ENCODE measurements at regions of chr3 and their contacts with region 1.

Region 1: GRCh38 chr3:115226844-115227445 is 79.9 kb upstream of the ZBTB20 start:
- DNase-seq: no peak

Region 2: GRCh38 chr3:114128231-114128630 is 1098.7 kb before region 1 on chr3:
- intact Hi-C with region 1: no loop called
- DNase-seq: no peak

Region 3: GRCh38 chr3:115783938-115784738 is 557.2 kb after region 1 on chr3:
- intact Hi-C with region 1: loop called in 1 of 2 experiments (anchors 10 kb)
- DNase-seq: peak; percentile 96